ENCODE measurements at regions of chr6 and their contacts with region 1.

Region 1: DNA sequence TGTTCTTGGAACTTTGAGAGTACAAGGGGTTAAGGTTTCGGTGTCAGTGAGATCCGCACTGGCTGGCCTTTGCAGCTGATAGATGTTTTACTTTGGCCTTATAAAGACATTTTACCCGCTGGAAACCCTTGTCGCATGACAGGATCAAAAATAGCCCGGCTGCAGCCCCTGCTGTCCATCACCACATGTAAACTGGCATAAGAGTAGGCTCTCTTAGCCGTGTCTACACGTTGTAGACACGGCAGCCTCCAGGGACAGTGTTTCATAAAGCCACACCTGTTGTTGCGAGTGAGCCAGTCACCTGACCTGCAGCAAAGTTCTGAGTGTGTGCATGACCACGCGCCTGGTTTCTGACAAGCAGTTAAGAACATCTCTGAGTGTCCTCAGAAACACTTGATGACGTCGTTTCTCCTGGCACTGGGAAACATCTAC is 8.5 kb downstream of the RBM24 start:
- DNase-seq: peak in 1 of 2 donors; percentile 50
- ATAC-seq: peak; percentile 69
- H3K4me3 ChIP-seq: peak overlapping the region in 1 of 2 donors; percentile 87
- H3K27ac ChIP-seq: peak overlapping the region; percentile 8 to 86
- H3K4me1 ChIP-seq: peaks cover 3 to 5% of the 10 kb centered on the region in 2 donors
- H3K27me3 ChIP-seq: no peaks in the 10 kb centered on the region

Region 2: DNA sequence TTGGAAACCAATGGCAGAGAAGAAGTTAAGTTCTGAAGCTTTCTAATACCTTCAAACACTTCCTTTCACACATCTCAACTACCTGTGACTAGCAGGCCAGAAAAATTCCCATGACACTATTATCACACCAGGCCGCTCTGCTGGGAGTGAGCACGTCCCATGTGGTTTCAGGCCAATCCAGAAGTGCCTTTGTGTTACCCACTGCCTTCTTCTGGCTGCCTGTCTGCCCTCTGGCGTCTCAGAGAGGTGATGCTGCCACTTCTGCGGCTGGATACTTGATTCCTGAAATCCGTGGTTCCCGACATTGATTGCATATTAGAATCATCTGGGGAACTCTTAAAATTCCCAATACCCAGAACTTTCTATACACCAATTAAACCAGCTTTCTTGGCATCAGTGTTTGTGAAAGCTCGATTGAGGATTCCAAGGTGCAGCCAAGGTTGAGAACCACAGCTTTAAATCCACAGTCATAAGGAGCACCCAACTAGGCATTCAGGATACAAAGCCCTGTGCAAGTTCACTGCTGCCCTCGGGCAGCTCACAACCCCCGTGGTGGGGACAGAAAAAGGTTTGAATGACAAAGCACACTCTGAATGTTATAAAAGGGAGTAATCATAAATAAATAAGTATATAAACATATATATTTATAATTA is 122.2 kb before region 1 on chr6:
- intact Hi-C with region 1: loop called in 1 of 2 experiments (anchors 10 kb)
- DNase-seq: no peak
- ATAC-seq: no peak
- H3K4me3 ChIP-seq: no peak overlapping the region
- H3K27ac ChIP-seq: no peak overlapping the region
- H3K4me1 ChIP-seq: no peaks in the 10 kb centered on the region
- H3K27me3 ChIP-seq: no peaks in the 10 kb centered on the region

Region 3: DNA sequence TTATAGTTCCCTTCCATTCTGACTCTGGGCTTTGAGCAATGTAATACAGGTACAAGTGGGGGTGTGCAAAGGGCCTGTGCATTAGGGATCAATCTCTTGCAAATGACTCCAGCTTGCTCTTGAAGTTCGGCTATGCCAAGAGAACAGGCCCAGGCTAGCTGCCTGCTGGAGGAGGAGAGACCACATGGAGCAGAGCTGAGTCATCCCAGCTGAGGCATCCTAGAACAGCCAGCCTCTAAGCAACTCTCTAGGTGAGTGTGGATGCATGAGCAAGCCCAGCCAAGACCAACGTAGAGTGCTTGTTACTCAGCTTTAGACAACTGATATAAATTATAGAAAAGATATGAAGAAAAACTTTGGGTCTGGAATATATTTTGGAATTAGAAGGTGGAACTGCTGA is 56.1 kb before region 1 on chr6:
- intact Hi-C with region 1: no loop called
- DNase-seq: no peak
- ATAC-seq: no peak
- H3K4me3 ChIP-seq: no peak overlapping the region
- H3K27ac ChIP-seq: no peak overlapping the region
- H3K4me1 ChIP-seq: peaks cover 0 to 2% of the 10 kb centered on the region in 2 donors
- H3K27me3 ChIP-seq: peaks cover 0 to 2% of the 10 kb centered on the region in 2 donors

Measured in aorta (tissue), 5 donors.